CD8-positive, alpha-beta T cell (primary cell): ENCODE measurements at regions of chr5 and their contacts with region 1.

Region 1: DNA sequence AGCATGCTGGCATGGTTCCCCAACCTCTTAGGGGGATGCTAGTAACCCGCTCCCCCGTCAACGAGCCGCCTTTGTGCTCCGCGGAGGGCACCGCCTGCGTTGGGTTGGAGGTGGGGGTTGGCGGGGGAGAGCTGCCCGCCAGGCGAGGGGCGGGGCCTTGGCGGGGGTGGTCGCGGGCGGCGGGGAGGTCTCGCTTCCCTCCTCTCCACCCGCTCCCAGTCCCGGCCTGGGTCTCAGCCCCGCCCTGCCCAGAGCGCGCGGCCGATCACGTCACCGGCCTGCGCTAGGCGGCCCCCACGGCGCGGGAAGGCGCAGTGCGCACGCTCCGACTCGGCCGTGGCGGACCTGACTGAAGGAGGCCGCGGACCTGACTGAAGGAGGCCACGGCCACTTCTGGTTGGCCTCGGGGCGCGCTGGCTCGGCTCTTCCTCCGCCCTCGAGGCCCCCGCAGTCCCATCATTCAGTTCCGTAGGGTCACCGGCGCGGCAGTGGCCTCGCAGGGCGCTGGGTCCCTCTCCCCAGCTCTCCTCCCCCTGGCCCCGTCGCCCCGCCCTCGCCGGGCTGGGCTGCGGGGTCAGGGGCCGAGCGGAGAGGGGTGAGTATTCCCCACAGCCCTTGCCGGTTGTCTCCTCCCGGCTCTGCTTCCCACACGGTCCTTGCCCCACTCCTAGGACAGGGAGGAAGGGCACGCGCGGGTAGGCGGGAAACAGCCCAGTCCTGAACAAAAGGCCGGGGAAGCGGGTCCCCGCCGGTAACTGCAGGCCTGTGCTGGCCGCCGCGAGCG is at the start of gene ATG10:
- DNase-seq: peak; percentile 75 to 95 (median 86)
- ATAC-seq: peak; percentile 85
- H3K4me3 ChIP-seq: peak within 1 kb of the TSS; percentile 85 to 99
- H3K4me3 Mint-ChIP-seq: peak within 1 kb of the TSS; percentile 100
- H3K27ac ChIP-seq: peak within 1 kb of the TSS; percentile 96 to 97
- H3K27ac Mint-ChIP-seq: peak within 1 kb of the TSS; percentile 100
- H3K4me1 ChIP-seq: peaks cover 12% of the 10 kb centered on the region
- H3K4me1 Mint-ChIP-seq: peaks cover 31% of the 10 kb centered on the region
- H3K27me3 ChIP-seq: no peaks in the 10 kb centered on the region
- H3K27me3 Mint-ChIP-seq: no peaks in the 10 kb centered on the region
- CTCF ChIP-seq: no peak
- total RNA-seq, gene ATG10: 4.7 to 5.7 TPM

Region 2: DNA sequence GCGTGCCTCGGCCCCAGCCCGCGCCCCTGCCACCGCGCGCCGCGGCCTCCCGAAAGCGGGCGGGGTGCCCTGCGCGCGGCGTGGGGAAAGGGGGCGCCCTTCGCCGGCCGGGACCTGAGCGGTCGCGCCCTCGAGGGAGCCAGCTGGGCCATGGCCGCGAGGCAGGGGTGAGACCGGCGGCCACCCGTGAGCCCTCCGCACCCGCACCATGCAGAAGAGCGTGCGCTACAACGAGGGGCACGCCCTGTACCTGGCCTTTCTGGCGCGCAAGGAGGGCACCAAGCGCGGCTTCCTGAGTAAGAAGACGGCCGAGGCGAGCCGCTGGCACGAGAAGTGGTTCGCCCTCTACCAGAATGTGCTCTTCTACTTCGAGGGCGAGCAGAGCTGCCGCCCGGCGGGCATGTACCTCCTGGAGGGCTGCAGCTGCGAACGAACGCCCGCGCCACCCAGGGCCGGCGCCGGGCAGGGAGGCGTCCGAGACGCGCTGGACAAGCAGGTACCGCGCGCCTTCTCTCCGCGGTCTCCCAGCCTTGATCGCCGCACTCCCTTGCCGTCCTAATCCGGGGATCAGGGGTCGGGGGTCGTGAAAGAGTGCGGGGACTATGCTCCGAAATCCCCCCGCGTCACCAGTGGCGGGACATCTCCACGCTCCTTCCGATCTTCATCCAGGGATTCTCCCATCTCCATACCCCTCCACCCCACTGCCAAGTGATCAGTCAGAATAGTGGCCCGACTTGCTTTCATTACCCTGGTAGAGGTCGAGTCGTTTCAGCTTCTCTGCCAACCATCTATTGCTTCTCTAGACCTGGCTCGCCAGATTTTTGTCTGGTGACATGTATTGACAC is 1011.2 kb before region 1 on chr5:
- CTCF ChIA-PET with region 1: no interaction called
- POLR2A ChIA-PET with region 1: no interaction called
- intact Hi-C with region 1: loop called in 1 of 2 experiments (anchors 5 kb)
- DNase-seq: peak; percentile 5 to 79 (median 51)
- ATAC-seq: peak; percentile 30
- H3K4me3 ChIP-seq: peak overlapping the region; percentile 61 to 81
- H3K4me3 Mint-ChIP-seq: peak overlapping the region; percentile 95
- H3K27ac ChIP-seq: peak overlapping the region in 1 of 2 experiments; percentile 50
- H3K27ac Mint-ChIP-seq: peak overlapping the region; percentile 95
- H3K4me1 ChIP-seq: peaks cover 53% of the 10 kb centered on the region
- H3K4me1 Mint-ChIP-seq: peaks cover 66% of the 10 kb centered on the region
- H3K27me3 ChIP-seq: peaks cover 0 to 7% of the 10 kb centered on the region in 2 experiments
- H3K27me3 Mint-ChIP-seq: peaks cover 4% of the 10 kb centered on the region
- CTCF ChIP-seq: no peak

Region 3: DNA sequence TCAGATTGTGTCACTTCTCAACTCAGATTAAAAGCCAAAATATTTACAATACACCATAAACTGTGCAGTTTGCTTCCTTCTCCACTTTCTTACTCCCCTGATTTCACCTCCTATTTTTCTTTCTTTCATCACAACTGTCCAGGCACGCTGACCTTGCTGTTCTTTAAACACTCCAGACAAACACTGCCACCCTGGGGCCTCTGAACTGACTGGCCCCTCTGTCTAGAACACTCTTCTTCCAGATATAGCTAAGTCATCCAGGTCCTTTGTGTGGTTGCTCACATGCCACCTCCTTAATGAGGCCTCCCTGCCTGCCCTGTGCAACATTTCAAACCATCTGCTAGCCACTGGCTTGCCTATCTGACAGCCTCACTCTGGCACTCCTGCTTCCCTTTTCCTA is 46.6 kb after region 1 on chr5:
- CTCF ChIA-PET with region 1: no interaction called
- POLR2A ChIA-PET with region 1: no interaction called
- intact Hi-C with region 1: no loop called
- DNase-seq: no peak
- ATAC-seq: no peak
- H3K4me3 ChIP-seq: no peak overlapping the region
- H3K4me3 Mint-ChIP-seq: no peak overlapping the region
- H3K27ac ChIP-seq: no peak overlapping the region
- H3K27ac Mint-ChIP-seq: no peak overlapping the region
- H3K4me1 ChIP-seq: no peaks in the 10 kb centered on the region
- H3K4me1 Mint-ChIP-seq: no peaks in the 10 kb centered on the region
- H3K27me3 ChIP-seq: no peaks in the 10 kb centered on the region
- H3K27me3 Mint-ChIP-seq: no peaks in the 10 kb centered on the region
- CTCF ChIP-seq: no peak

Region 4: DNA sequence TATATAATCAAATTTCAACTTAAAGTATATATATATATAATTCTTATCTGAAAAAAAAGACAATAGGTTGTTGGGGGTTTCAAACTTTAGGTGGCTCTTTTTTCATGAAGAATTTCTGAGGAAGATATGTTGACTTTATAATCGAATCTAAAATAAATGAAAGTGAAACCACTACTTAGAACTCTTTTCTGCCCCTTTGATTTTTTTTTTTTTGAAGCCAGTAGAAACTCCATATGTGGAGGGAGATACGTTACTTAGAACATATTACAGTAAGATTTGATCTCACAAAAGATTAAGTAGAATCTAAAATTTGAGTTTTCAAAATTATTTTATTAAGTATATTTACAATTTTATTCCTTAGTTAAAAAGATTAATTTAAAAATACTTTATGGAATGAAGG is 96.8 kb after region 1 on chr5:
- CTCF ChIA-PET with region 1: no interaction called
- POLR2A ChIA-PET with region 1: no interaction called
- intact Hi-C with region 1: loop called (anchors 1 to 5 kb)
- DNase-seq: peak in 2 of 9 experiments; percentile 15 to 51
- ATAC-seq: peak; percentile 49
- H3K4me3 ChIP-seq: peak overlapping the region in 1 of 2 experiments; percentile 28
- H3K4me3 Mint-ChIP-seq: peak overlapping the region; percentile 73
- H3K27ac ChIP-seq: no peak overlapping the region
- H3K27ac Mint-ChIP-seq: peak overlapping the region; percentile 24
- H3K4me1 ChIP-seq: peaks cover 5% of the 10 kb centered on the region
- H3K4me1 Mint-ChIP-seq: peaks cover 12% of the 10 kb centered on the region
- H3K27me3 ChIP-seq: no peaks in the 10 kb centered on the region
- H3K27me3 Mint-ChIP-seq: no peaks in the 10 kb centered on the region
- CTCF ChIP-seq: no peak

Region 5: GRCh38 chr5:82278095-82278918 is 306.4 kb after region 1 on chr5 and contains the start of gene RPS23:
- CTCF ChIA-PET with region 1: no interaction called
- POLR2A ChIA-PET with region 1: no interaction called
- intact Hi-C with region 1: loop called (anchors 1 to 5 kb)
- DNase-seq: peak; percentile 73 to 94 (median 86)
- ATAC-seq: peak; percentile 95
- H3K4me3 ChIP-seq: peak within 1 kb of the TSS; percentile 63 to 94
- H3K4me3 Mint-ChIP-seq: peak within 1 kb of the TSS; percentile 97
- H3K27ac ChIP-seq: peak within 1 kb of the TSS; percentile 71 to 84
- H3K27ac Mint-ChIP-seq: peak within 1 kb of the TSS; percentile 96
- H3K4me1 ChIP-seq: peaks cover 18% of the 10 kb centered on the region
- H3K4me1 Mint-ChIP-seq: peaks cover 44% of the 10 kb centered on the region
- H3K27me3 ChIP-seq: no peaks in the 10 kb centered on the region
- H3K27me3 Mint-ChIP-seq: no peaks in the 10 kb centered on the region
- CTCF ChIP-seq: no peak
- total RNA-seq, gene RPS23: 3,866 to 4,021 TPM

Region 6: GRCh38 chr5:83011985-83012384 is 1040.1 kb after region 1 on chr5:
- CTCF ChIA-PET with region 1: no interaction called
- POLR2A ChIA-PET with region 1: no interaction called
- intact Hi-C with region 1: no loop called
- DNase-seq: peak in 1 of 9 experiments; percentile 4
- ATAC-seq: no peak
- H3K4me3 ChIP-seq: no peak overlapping the region
- H3K4me3 Mint-ChIP-seq: no peak overlapping the region
- H3K27ac ChIP-seq: no peak overlapping the region
- H3K27ac Mint-ChIP-seq: no peak overlapping the region
- H3K4me1 ChIP-seq: no peaks in the 10 kb centered on the region
- H3K4me1 Mint-ChIP-seq: no peaks in the 10 kb centered on the region
- H3K27me3 ChIP-seq: no peaks in the 10 kb centered on the region
- H3K27me3 Mint-ChIP-seq: no peaks in the 10 kb centered on the region
- CTCF ChIP-seq: no peak

Region 7: DNA sequence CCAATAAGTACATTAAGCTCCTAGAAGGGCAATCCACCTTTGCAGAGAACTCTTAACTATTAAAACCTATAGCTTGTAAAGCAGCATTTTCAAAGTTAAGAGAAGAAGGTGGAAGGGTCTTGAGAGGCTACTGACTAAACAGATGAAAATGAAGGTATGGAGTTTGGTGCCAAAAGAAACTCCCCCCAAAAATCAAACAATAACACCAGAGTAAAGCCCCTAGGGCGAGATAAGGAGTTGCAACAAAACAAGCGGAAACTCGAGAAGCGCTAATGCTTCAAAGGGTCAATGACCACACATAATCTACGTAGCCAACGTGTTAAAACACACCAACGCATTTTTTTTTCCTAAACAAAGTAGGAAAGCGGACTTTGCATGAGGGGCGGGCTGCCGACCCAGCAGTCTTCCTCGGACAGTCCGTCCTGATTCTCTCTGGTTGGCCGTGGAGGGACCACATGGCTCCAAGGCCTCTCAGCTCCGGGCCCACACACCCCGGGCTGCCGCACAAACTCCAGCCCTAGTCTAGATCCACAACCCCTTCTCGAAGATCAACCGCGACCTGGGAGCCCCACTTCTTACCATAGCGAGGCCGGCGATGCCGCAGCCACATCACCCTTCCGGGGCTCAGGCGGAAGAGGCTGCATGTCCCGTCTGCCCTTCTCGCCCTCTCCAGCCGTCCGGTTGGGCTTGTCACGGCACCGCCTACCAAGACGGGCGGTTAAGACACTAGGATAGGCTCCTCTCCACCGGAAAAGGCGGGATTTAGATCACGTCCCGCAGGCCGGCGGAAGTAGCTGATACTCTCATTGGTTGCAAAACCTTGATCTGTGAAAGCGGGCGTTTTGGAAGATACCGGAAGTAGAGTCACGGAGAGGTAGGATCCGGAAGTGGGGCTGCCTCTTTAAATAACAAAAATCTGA is 1105.1 kb after region 1 on chr5 and contains the starts of genes TMEM167A and XRCC4:
- CTCF ChIA-PET with region 1: no interaction called
- POLR2A ChIA-PET with region 1: no interaction called
- intact Hi-C with region 1: loop called (anchors 5 to 10 kb)
- DNase-seq: peak; percentile 84 to 98 (median 92)
- ATAC-seq: peak; percentile 98
- H3K4me3 ChIP-seq: peak within 1 kb of the TSS; percentile 81 to 93
- H3K4me3 Mint-ChIP-seq: peak within 1 kb of the TSS; percentile 99
- H3K27ac ChIP-seq: peak within 1 kb of the TSS; percentile 77 to 96
- H3K27ac Mint-ChIP-seq: peak within 1 kb of the TSS; percentile 99
- H3K4me1 ChIP-seq: peaks cover 28% of the 10 kb centered on the region
- H3K4me1 Mint-ChIP-seq: peaks cover 59% of the 10 kb centered on the region
- H3K27me3 ChIP-seq: no peaks in the 10 kb centered on the region
- H3K27me3 Mint-ChIP-seq: no peaks in the 10 kb centered on the region
- CTCF ChIP-seq: no peak
- total RNA-seq, gene TMEM167A: 51.6 to 59.0 TPM
- total RNA-seq, gene XRCC4: 1.1 to 1.3 TPM